Posterior vena cava (tissue), 2 donors: ENCODE measurements at regions of chr3 and their contacts with region 1.

Region 1: GRCh38 chr3:86937305-86937791 is 53.6 kb downstream of the VGLL3 start:
- DNase-seq: peak; percentile 80

Region 2: GRCh38 chr3:86982883-86983282 is 45.5 kb after region 1 on chr3:
- intact Hi-C with region 1: loop called in 1 of 2 experiments (anchors 10 kb)
- DNase-seq: no peak